ENCODE measurements at regions of chr9 and their contacts with region 1.

Region 1: DNA sequence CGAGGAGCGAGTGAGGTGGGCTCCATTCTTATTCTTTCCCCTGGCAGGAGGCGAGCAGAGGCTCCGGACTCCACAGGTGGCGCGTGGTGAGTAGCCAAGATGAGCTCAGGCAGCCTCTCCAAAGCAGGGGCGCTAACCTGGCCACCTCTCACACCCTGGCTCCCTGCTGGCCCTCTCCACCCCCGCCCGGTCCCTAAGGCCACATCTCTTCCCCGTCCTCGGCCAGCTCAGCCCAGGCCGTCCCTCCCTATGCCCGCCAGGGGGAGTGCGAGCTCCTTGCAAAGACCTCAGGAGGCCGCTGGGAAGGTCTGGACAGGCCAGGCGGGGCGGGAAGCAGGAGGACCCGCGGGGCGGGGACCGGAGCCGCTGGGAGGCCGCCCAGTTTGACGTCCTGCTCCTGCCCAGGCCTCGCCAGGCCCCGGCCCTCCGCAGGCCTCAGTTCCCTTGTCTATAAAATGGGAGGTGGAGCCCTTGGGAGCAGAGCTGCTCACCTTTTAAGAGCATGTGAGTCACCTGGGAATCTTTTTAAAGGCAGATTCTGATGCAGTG is 46.3 kb upstream of the GGTA1 start:
- DNase-seq: peak; percentile 91 to 96
- ATAC-seq: peak; percentile 94 to 98
- H3K4me3 ChIP-seq: peak overlapping the region; percentile 26; the same call in 2 of the 3 replicates
- H3K27ac ChIP-seq: peak overlapping the region; percentile 76 to 85
- H3K4me1 ChIP-seq: peaks cover 11% of the 10 kb centered on the region; the same call in 2 of the 3 replicates
- CTCF ChIP-seq: peak; percentile 90
- EP300 ChIP-seq: no peak
- POLR2A ChIP-seq: peak; percentile 25; the same call in 1 of the 2 replicates
- RAD21 ChIP-seq: peak; percentile 95 to 96

Region 2: GRCh38 chr9:121557581-121558447 is 11.9 kb after region 1 on chr9:
- CTCF ChIA-PET with region 1: interaction called, 44 read pairs
- POLR2A ChIA-PET with region 1: interaction called, 4 read pairs
- DNase-seq: peak in 1 of 2 experiments; percentile 26
- ATAC-seq: no peak; a peak in 1 of 6 replicates
- H3K4me3 ChIP-seq: no peak overlapping the region
- H3K27ac ChIP-seq: peak overlapping the region in 1 of 2 experiments; percentile 4; a peak in 1 of 6 replicates
- H3K4me1 ChIP-seq: peaks cover 17% of the 10 kb centered on the region
- CTCF ChIP-seq: no peak
- EP300 ChIP-seq: no peak
- POLR2A ChIP-seq: no peak
- RAD21 ChIP-seq: no peak

Region 3: GRCh38 chr9:121581786-121582600 is 36.0 kb after region 1 on chr9:
- CTCF ChIA-PET with region 1: interaction called, 21 read pairs
- POLR2A ChIA-PET with region 1: no interaction called
- DNase-seq: no peak
- ATAC-seq: peak in 1 of 2 experiments; percentile 17; a peak in 2 of 6 replicates
- H3K4me3 ChIP-seq: no peak overlapping the region
- H3K27ac ChIP-seq: no peak overlapping the region
- H3K4me1 ChIP-seq: no peaks in the 10 kb centered on the region
- CTCF ChIP-seq: no peak
- EP300 ChIP-seq: no peak
- POLR2A ChIP-seq: no peak
- RAD21 ChIP-seq: no peak

Region 4: GRCh38 chr9:121621113-121621449 is 75.1 kb after region 1 on chr9:
- CTCF ChIA-PET with region 1: interaction called, 18 read pairs
- POLR2A ChIA-PET with region 1: no interaction called
- DNase-seq: peak; percentile 56 to 67
- ATAC-seq: peak; percentile 79 to 93
- H3K4me3 ChIP-seq: no peak overlapping the region
- H3K27ac ChIP-seq: no peak overlapping the region
- H3K4me1 ChIP-seq: peaks cover 9% of the 10 kb centered on the region; the same call in 2 of the 3 replicates
- CTCF ChIP-seq: peak; percentile 47
- EP300 ChIP-seq: no peak
- POLR2A ChIP-seq: no peak
- RAD21 ChIP-seq: peak; percentile 53 to 60

Region 5: DNA sequence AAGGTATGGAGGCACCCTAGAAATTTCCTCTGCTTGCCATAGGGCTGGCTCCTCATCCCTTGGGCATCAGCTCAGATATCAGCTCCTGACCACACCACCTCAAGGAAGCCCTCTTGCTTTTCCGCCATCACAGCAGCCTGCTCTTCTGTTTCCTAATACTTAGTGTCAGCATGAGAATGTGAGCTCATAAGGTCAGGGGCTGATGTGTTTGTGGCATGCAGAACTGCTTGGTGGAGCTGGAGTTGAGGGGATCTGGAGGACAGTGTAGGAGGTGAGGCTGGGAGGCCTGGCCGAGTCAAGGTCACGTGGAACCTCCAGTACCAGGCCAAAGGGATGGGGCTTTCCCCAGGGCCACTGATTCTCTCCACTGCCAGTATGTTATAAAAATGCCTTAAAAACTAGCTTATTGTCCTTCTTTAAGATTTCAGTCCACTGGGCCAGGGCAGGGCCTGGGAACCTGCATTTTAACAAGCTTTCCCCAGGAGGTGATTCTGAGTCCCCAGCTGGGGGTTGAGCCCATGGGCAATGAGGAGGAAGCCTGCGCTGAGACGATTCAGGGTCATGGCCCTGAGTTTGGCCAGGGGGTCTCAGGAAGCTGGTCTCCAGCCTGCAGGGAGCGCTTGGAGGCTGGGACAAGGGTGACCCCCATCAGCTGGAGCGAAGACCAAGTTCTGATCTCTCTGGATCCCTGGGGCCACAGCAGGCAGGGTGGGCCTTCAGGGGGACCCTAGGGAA is 134.1 kb after region 1 on chr9:
- CTCF ChIA-PET with region 1: interaction called, 51 read pairs
- POLR2A ChIA-PET with region 1: no interaction called
- DNase-seq: no peak
- ATAC-seq: no peak
- H3K4me3 ChIP-seq: no peak overlapping the region
- H3K27ac ChIP-seq: no peak overlapping the region
- H3K4me1 ChIP-seq: peaks cover 10% of the 10 kb centered on the region; the same call in 2 of the 3 replicates
- CTCF ChIP-seq: no peak
- EP300 ChIP-seq: no peak
- POLR2A ChIP-seq: no peak
- RAD21 ChIP-seq: no peak

Region 6: GRCh38 chr9:121798941-121799340 is 253.0 kb after region 1 on chr9:
- CTCF ChIA-PET with region 1: no interaction called
- POLR2A ChIA-PET with region 1: no interaction called
- DNase-seq: no peak
- ATAC-seq: no peak
- H3K4me3 ChIP-seq: no peak overlapping the region
- H3K27ac ChIP-seq: no peak overlapping the region
- H3K4me1 ChIP-seq: no peaks in the 10 kb centered on the region
- CTCF ChIP-seq: no peak
- EP300 ChIP-seq: no peak
- POLR2A ChIP-seq: no peak
- RAD21 ChIP-seq: no peak

Region 7: GRCh38 chr9:121992571-121993212 is 446.7 kb after region 1 on chr9:
- CTCF ChIA-PET with region 1: interaction called, 21 read pairs
- POLR2A ChIA-PET with region 1: interaction called, 3 read pairs
- DNase-seq: peak; percentile 69 to 74
- ATAC-seq: peak; percentile 90 to 92
- H3K4me3 ChIP-seq: no peak overlapping the region
- H3K27ac ChIP-seq: no peak overlapping the region
- H3K4me1 ChIP-seq: no peaks in the 10 kb centered on the region
- CTCF ChIP-seq: peak; percentile 89
- EP300 ChIP-seq: no peak
- POLR2A ChIP-seq: no peak
- RAD21 ChIP-seq: peak; percentile 85 to 91

Region 8: DNA sequence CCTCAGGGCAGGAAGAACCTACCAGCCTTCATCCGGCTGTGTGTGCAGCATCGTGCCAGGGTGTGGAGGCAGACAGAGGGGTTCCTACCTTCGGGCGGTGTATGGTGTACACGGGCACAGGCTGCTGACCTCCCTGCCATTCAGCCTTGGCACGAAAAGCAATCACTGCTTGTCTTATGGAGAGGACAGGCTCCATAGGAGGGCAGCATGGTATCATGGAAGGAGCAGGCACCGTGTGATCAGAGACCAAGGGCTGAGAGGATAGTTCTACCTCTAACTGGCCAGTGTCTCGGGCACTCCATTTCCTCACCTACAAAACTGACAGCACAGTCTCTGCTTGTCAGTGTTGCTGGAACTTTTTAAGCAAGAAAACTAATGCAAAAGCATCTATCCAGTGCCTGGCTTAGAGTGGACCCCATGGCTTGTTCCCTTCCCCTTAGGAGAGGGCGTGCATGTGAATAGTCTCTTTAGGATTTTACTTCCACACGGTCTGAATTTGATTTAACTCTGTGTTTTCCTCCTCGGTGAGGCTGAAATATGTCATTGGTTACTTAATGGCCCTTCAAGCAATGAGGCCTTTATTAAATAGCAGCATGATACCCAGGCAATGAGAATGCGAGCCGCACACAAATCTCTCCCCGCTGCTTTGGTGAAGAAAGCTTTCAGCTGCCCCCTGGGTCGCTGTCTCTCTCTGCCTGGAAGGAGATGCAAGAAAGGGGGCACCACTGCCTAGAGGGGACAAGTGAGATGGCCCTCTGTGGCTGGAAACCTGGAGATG is 525.0 kb after region 1 on chr9:
- CTCF ChIA-PET with region 1: no interaction called
- POLR2A ChIA-PET with region 1: no interaction called
- DNase-seq: no peak
- ATAC-seq: no peak; a peak in 1 of 6 replicates
- H3K4me3 ChIP-seq: no peak overlapping the region
- H3K27ac ChIP-seq: no peak overlapping the region
- H3K4me1 ChIP-seq: no peaks in the 10 kb centered on the region
- CTCF ChIP-seq: no peak
- EP300 ChIP-seq: no peak
- POLR2A ChIP-seq: no peak
- RAD21 ChIP-seq: no peak